Activated CD4-positive, alpha-beta T cell treated with anti-CD3 and anti-CD28 coated beads, Interleukin-2, amount 10 ng/mL, durations not matched to agents 24 days and 14 days (primary cell): ENCODE measurements at regions of chr5 and their contacts with region 1.

Region 1: GRCh38 chr5:146249801-146250200 is 46.4 kb downstream of the RBM27 start:
- DNase-seq: no peak
- H3K4me3 Mint-ChIP-seq: no peak overlapping the region
- H3K27ac Mint-ChIP-seq: no peak overlapping the region
- H3K4me1 Mint-ChIP-seq: peaks cover 9% of the 10 kb centered on the region
- H3K27me3 Mint-ChIP-seq: no peaks in the 10 kb centered on the region

Region 2: DNA sequence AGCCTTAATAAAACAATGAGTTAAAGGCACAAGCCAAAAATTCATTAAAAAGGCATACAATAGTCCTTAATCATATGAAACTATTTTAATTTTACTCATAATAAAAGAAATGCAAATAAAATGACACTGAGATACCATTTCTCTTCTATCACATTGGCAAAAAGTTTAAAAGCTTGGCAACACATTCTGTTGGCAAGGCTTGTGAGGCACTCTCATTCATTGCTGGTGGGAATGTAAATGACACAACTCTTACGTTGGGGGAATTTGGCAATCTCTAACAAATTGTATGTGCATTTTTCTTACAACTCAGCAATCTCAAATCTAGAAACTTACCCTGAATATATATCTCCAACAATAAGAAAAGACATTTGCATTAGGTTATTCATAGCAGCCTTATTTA is 526.3 kb before region 1 on chr5:
- intact Hi-C with region 1: no loop called
- DNase-seq: no peak
- H3K4me3 Mint-ChIP-seq: no peak overlapping the region
- H3K27ac Mint-ChIP-seq: no peak overlapping the region
- H3K4me1 Mint-ChIP-seq: no peaks in the 10 kb centered on the region
- H3K27me3 Mint-ChIP-seq: no peaks in the 10 kb centered on the region

Region 3: GRCh38 chr5:146185161-146185560 is 64.6 kb before region 1 on chr5:
- intact Hi-C with region 1: no loop called
- DNase-seq: no peak
- H3K4me3 Mint-ChIP-seq: peak overlapping the region; percentile 32
- H3K27ac Mint-ChIP-seq: no peak overlapping the region
- H3K4me1 Mint-ChIP-seq: peaks cover 12% of the 10 kb centered on the region
- H3K27me3 Mint-ChIP-seq: peaks cover 7% of the 10 kb centered on the region

Region 4: GRCh38 chr5:146273109-146273508 is 23.3 kb after region 1 on chr5:
- intact Hi-C with region 1: no loop called
- DNase-seq: no peak
- H3K4me3 Mint-ChIP-seq: no peak overlapping the region
- H3K27ac Mint-ChIP-seq: no peak overlapping the region
- H3K4me1 Mint-ChIP-seq: no peaks in the 10 kb centered on the region
- H3K27me3 Mint-ChIP-seq: no peaks in the 10 kb centered on the region

Region 5: GRCh38 chr5:146283344-146283761 is 33.6 kb after region 1 on chr5:
- intact Hi-C with region 1: no loop called
- DNase-seq: no peak
- H3K4me3 Mint-ChIP-seq: no peak overlapping the region
- H3K27ac Mint-ChIP-seq: no peak overlapping the region
- H3K4me1 Mint-ChIP-seq: no peaks in the 10 kb centered on the region
- H3K27me3 Mint-ChIP-seq: no peaks in the 10 kb centered on the region

Region 6: GRCh38 chr5:146878476-146879172 is 628.8 kb after region 1 on chr5 and contains the start of gene PPP2R2B:
- intact Hi-C with region 1: loop called (anchors 5 kb)
- DNase-seq: peak; percentile 74
- H3K4me3 Mint-ChIP-seq: peak within 1 kb of the TSS; percentile 85
- H3K27ac Mint-ChIP-seq: no peak within 1 kb of the TSS
- H3K4me1 Mint-ChIP-seq: peaks cover 9% of the 10 kb centered on the region
- H3K27me3 Mint-ChIP-seq: peaks cover 46% of the 10 kb centered on the region
- total RNA-seq, gene PPP2R2B: 0.12 TPM in 1 of 2 replicates, not detected in the other